ENCODE measurements at regions of chr5 and their contacts with region 1.

Region 1: GRCh38 chr5:163269624-163270023 is 167.8 kb upstream of the CCNG1 start:
- DNase-seq: no peak
- H3K4me3 ChIP-seq: no peak overlapping the region
- H3K27ac ChIP-seq: no peak overlapping the region
- H3K4me1 ChIP-seq: no peaks in the 10 kb centered on the region
- H3K27me3 ChIP-seq: no peaks in the 10 kb centered on the region
- CTCF ChIP-seq: no peak
- POLR2A ChIP-seq: no peak

Region 2: DNA sequence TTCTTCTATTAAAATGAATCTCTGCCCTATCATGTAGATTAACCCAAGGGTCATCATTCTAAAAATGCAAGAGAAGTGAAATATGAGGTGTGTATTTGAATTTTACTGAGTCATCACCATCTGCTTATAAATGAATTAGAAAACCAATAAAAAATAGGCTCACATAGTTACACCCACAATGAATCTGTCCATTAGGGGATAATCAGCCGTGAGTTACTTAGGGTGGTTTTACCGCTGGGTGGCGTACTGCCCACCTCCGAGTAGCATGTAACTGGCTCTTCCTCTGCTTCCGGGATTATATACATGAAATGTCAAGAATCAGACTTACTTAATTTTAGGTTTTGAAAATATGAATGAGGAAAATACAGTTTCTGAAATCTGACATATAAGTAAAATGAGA is 165.2 kb before region 1 on chr5:
- CTCF ChIA-PET with region 1: no interaction called
- POLR2A ChIA-PET with region 1: no interaction called
- dilution Hi-C with region 1: no loop called
- intact Hi-C with region 1: loop called (anchors 1 kb)
- DNase-seq: no peak
- H3K4me3 ChIP-seq: no peak overlapping the region
- H3K27ac ChIP-seq: no peak overlapping the region
- H3K4me1 ChIP-seq: no peaks in the 10 kb centered on the region
- H3K27me3 ChIP-seq: no peaks in the 10 kb centered on the region
- CTCF ChIP-seq: no peak
- POLR2A ChIP-seq: no peak

Region 3: GRCh38 chr5:163283360-163283759 is 13.7 kb after region 1 on chr5:
- CTCF ChIA-PET with region 1: no interaction called
- POLR2A ChIA-PET with region 1: no interaction called
- dilution Hi-C with region 1: no loop called
- intact Hi-C with region 1: no loop called
- DNase-seq: no peak
- H3K4me3 ChIP-seq: no peak overlapping the region
- H3K27ac ChIP-seq: no peak overlapping the region
- H3K4me1 ChIP-seq: no peaks in the 10 kb centered on the region
- H3K27me3 ChIP-seq: no peaks in the 10 kb centered on the region
- CTCF ChIP-seq: no peak
- POLR2A ChIP-seq: no peak

Region 4: DNA sequence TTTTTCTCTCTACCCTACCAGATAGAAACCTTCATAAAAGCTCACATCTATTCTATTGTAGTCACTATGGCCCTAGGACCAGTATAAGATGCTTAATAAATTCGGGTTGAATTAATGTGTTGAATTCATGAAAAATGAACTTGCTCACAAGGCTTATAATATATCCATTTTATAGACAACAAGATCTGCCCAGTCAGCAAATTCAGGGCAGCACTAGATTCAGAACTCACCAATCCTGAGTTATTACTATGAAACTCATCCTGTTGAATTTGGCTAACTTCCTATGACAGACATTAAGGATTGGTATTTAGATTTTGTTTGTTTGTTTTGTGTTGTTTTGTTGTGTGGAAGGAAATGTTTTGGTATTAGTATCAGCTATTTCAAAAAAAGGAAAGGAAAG is 24.2 kb after region 1 on chr5:
- CTCF ChIA-PET with region 1: no interaction called
- POLR2A ChIA-PET with region 1: no interaction called
- dilution Hi-C with region 1: no loop called
- intact Hi-C with region 1: no loop called
- DNase-seq: no peak
- H3K4me3 ChIP-seq: no peak overlapping the region
- H3K27ac ChIP-seq: no peak overlapping the region
- H3K4me1 ChIP-seq: no peaks in the 10 kb centered on the region
- H3K27me3 ChIP-seq: no peaks in the 10 kb centered on the region
- CTCF ChIP-seq: no peak
- POLR2A ChIP-seq: no peak

Measured in endothelial cell of umbilical vein (primary cell).